Activated CD4-positive, alpha-beta T cell treated with anti-CD3 and anti-CD28 coated beads for 36 hours (primary cell): ENCODE measurements at regions of chr1 and their contacts with region 1.

Region 1: GRCh38 chr1:7704214-7705047 is 66.7 kb upstream of the VAMP3 start:
- DNase-seq: peak; percentile 95
- ATAC-seq: peak; percentile 98
- H3K4me3 Mint-ChIP-seq: peak overlapping the region; percentile 61
- H3K27ac Mint-ChIP-seq: no peak overlapping the region
- H3K4me1 Mint-ChIP-seq: peaks cover 18% of the 10 kb centered on the region
- H3K27me3 Mint-ChIP-seq: peaks cover 44% of the 10 kb centered on the region

Region 2: DNA sequence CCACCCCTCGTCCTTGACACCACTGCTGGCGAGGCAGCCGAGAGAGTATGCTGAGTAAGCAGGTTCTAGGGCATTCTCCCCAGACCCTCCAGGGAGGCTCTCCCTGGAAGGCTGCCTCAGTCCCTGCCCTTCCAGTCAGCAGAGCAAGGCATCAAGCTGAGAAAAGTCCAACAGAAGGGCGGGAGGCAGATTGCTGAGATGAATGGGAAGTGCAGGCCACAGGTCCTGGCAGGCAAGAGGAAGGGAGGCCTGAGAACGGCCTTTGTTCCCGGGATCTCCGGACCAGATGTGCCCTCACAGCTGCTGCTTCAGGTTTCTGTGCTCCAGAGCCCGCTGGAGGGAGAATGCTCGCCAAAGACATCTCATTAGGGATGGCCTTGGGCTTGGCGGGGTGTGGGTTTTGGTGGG is 203.3 kb before region 1 on chr1:
- CTCF ChIA-PET with region 1: no interaction called
- POLR2A ChIA-PET with region 1: no interaction called
- intact Hi-C with region 1: no loop called
- DNase-seq: no peak
- ATAC-seq: no peak
- H3K4me3 Mint-ChIP-seq: no peak overlapping the region
- H3K27ac Mint-ChIP-seq: no peak overlapping the region
- H3K4me1 Mint-ChIP-seq: no peaks in the 10 kb centered on the region
- H3K27me3 Mint-ChIP-seq: no peaks in the 10 kb centered on the region

Region 3: DNA sequence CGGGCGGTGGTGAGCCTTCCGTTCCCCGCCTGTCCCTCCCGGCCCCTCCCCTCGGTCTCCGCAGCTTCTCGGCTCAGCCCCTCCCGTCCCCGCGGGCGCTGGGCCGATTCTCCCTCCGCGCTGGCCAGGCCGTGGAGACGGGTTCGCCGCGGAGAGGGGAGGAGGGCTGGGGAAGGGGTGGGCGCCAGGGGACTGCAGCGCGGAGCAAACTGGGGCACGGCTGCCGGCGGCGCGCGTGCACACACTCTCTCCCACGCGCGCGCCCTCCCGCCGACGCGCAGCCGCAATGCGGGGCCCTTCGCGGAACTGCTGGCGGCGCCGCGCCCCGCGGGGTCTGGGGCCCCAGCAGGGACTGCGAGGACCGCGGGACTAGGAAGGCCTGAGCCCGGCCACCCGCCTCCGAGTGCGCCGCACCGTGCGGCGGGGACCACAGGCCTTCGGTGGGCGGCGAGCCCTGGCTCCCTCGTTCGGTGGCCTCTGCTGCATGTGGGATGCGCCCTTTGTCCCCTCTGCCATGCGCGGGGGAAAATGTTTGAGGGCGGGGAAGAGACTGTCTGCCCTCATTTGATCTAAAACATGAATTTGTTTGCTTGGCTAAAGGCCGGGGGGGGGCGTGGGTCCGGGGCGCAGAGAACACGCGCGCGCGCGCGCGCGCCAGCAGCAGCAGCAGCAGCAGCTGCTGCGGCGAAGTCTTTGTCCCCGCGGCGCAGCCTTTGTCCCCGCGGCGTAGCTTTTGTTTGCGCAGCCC is 24.1 kb before region 1 on chr1:
- CTCF ChIA-PET with region 1: interaction called, 5 read pairs
- POLR2A ChIA-PET with region 1: no interaction called
- intact Hi-C with region 1: loop called in 1 of 2 experiments (anchors 1 kb)
- DNase-seq: peak; percentile 59
- ATAC-seq: peak; percentile 67
- H3K4me3 Mint-ChIP-seq: peak overlapping the region; percentile 62
- H3K27ac Mint-ChIP-seq: no peak overlapping the region
- H3K4me1 Mint-ChIP-seq: no peaks in the 10 kb centered on the region
- H3K27me3 Mint-ChIP-seq: no peaks in the 10 kb centered on the region

Region 4: DNA sequence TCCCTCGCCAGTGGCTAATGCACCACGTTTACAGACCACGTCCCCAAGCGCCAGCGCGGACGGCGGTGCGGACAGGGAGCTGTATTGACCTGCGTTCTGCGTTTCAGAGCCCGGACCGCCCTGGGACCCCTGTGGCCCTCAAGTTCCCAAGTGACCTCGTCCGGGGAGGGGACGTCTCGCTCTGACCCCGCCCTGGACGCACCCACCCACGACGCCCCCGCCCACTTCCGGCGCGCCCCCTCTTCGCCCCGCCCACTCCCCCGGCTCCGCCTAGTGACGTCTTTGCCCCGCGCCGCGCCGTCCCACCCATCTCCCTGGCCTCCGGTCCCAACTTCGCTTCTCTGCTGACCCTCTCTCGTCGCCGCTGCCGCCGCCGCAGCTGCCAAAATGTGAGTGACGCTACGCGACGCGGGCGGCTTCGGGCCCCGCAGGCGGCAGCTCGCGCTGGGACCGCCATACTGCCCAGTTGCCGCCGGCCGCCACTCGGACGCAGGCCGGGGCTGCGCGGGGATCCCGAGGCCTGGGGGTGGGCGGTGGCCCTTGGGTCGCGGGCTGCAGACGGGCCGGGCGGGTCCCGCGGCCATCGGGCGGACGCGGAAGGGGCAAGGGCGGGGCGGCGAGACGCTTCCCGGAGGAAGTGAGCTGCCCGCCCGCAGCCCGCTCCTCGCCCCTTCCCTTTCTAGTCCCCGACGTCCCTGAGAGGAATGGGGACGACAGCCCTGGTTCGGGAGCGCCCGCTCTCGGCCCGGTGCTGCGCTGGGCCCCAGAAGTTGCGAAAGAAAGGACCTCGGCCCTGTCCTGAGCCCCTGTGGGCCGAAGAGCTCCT is 66.8 kb after region 1 on chr1 and contains the start of gene VAMP3:
- CTCF ChIA-PET with region 1: no interaction called
- POLR2A ChIA-PET with region 1: no interaction called
- intact Hi-C with region 1: loop called in 1 of 2 experiments (anchors 1 kb)
- DNase-seq: peak; percentile 94
- ATAC-seq: peak; percentile 90
- H3K4me3 Mint-ChIP-seq: peak within 1 kb of the TSS; percentile 80
- H3K27ac Mint-ChIP-seq: peak within 1 kb of the TSS; percentile 72
- H3K4me1 Mint-ChIP-seq: peaks cover 21% of the 10 kb centered on the region
- H3K27me3 Mint-ChIP-seq: peaks cover 6% of the 10 kb centered on the region
- total RNA-seq, gene VAMP3: 16.8 to 17.4 TPM

Region 5: DNA sequence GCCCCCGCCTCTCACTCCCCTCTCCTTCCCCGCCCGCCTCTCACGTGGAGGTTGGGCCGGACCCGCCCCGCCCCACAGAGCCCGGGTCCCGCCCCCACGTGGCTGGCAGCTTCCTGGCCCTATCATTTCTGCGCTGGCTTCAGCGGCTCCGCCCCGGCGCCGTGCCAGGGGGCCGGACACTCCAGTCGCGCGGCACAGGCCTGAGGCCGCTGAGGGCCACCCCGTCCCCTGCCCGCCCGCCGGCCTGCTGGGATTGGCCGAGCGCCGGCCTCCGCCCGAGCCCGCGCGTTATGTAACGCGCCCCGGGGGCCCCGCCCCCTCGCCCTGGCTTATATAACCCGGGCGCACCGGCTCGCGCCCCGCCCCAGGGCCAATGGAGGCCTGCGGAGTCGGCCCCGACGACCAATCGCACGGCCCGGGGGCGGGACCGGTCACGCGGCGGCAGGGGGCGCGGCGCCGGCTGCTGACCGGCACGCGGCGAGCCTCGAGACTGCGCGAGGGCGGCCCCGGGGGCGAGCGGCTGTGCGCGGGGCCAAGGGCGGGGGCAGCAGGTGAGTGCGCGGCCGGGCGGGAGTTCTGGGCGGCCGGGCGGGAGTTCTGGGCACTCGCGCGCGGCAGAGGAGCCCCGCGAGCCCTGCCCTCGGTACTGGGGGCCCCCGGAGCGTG is 79.5 kb after region 1 on chr1 and contains the start of gene PER3:
- CTCF ChIA-PET with region 1: no interaction called
- POLR2A ChIA-PET with region 1: no interaction called
- intact Hi-C with region 1: loop called in 1 of 2 experiments (anchors 1 kb)
- DNase-seq: peak; percentile 92
- ATAC-seq: peak; percentile 95
- H3K4me3 Mint-ChIP-seq: peak within 1 kb of the TSS; percentile 67
- H3K27ac Mint-ChIP-seq: no peak within 1 kb of the TSS
- H3K4me1 Mint-ChIP-seq: peaks cover 22% of the 10 kb centered on the region
- H3K27me3 Mint-ChIP-seq: no peaks in the 10 kb centered on the region
- total RNA-seq, gene PER3: 2.3 to 2.5 TPM